ENCODE measurements at regions of chr4 and their contacts with region 1.

Region 1: GRCh38 chr4:101419324-101420135 is 72.2 kb upstream of the PPP3CA start:
- DNase-seq: no peak
- H3K4me3 Mint-ChIP-seq: peak overlapping the region; percentile 65
- H3K27ac Mint-ChIP-seq: peak overlapping the region; percentile 79
- H3K4me1 Mint-ChIP-seq: peaks cover 58% of the 10 kb centered on the region
- H3K27me3 Mint-ChIP-seq: peaks cover 11% of the 10 kb centered on the region

Region 2: DNA sequence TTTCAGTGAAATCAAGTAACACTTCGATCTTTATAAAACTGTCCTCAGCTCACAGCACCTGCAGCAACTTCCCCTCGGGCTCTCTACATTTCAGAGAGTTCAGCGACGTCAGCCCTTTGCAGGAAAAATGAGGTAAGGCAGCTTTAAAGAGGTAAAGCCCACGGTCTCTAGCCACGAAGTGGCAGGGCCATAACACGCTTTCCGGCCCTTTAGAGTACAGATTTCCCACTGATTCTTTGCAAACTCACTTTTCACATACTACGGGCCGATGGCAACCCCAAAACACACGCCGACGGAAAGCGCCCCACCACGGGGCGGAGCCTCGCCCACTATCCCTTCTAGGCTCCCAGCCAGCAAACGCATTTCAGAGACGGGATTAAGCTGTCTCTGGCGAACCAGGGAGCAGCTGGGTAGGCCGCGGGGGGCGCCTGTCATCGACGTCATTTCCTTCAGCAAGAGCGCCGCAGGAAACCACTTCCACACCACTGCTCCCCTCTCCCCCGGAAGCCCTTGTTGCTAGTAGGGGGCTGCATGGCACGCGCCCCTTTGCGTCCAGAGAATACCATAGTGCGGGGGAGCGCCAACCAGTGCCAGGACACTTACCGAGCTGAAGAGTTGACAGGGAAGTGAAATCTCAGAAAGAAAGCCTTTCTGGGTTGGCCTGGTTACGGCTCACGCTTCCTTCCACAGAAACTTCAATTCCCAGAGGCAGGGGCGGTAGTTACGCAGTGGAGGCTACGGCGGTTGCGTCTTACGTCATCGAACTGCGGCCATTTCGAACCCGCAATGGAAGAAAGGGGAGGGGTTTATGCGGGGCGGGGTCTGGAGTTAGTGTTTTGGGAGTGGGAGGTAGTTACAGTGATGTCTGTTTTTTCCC is 1856.0 kb before region 1 on chr4 and contains the start of gene TRMT10A:
- intact Hi-C with region 1: loop called (anchors 5 kb)
- DNase-seq: peak; percentile 92
- H3K4me3 Mint-ChIP-seq: peak within 1 kb of the TSS; percentile 89
- H3K27ac Mint-ChIP-seq: peak within 1 kb of the TSS; percentile 96
- H3K4me1 Mint-ChIP-seq: peaks cover 25% of the 10 kb centered on the region
- H3K27me3 Mint-ChIP-seq: peaks cover 11% of the 10 kb centered on the region
- total RNA-seq, gene TRMT10A: 7.3 TPM in 2 replicates

Region 3: GRCh38 chr4:100823066-100823992 is 596.2 kb before region 1 on chr4:
- intact Hi-C with region 1: loop called (anchors 1 kb)
- DNase-seq: peak; percentile 32
- H3K4me3 Mint-ChIP-seq: no peak overlapping the region
- H3K27ac Mint-ChIP-seq: peak overlapping the region; percentile 79
- H3K4me1 Mint-ChIP-seq: peaks cover 40% of the 10 kb centered on the region
- H3K27me3 Mint-ChIP-seq: no peaks in the 10 kb centered on the region

Region 4: GRCh38 chr4:101205916-101206315 is 213.6 kb before region 1 on chr4:
- intact Hi-C with region 1: loop called (anchors 1 kb)
- DNase-seq: peak; percentile 56
- H3K4me3 Mint-ChIP-seq: peak overlapping the region; percentile 0
- H3K27ac Mint-ChIP-seq: peak overlapping the region; percentile 67
- H3K4me1 Mint-ChIP-seq: peaks cover 42% of the 10 kb centered on the region
- H3K27me3 Mint-ChIP-seq: no peaks in the 10 kb centered on the region

Region 5: GRCh38 chr4:101321481-101322042 is 98.0 kb before region 1 on chr4:
- intact Hi-C with region 1: no loop called
- DNase-seq: no peak
- H3K4me3 Mint-ChIP-seq: no peak overlapping the region
- H3K27ac Mint-ChIP-seq: no peak overlapping the region
- H3K4me1 Mint-ChIP-seq: peaks cover 4% of the 10 kb centered on the region
- H3K27me3 Mint-ChIP-seq: peaks cover 21% of the 10 kb centered on the region

Region 6: DNA sequence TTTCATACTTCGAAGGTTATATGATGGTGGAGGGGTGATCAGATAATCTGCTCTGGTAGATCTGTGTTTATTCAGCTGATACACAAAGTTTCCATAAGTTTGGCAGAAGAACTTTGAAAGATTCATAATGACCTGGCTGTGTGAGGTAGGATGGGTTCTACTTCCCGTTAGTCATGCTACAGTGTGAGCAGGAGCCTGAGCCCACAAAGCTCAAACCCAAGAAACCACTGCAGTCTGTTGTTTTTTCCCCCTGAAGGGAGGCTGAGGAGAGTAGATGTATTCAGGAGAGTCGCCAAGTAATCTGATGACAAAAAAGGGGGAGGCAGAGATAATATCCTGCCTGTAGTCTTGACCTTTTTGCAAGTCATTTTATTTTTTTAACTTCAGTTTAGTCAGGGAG is 19.4 kb before region 1 on chr4:
- intact Hi-C with region 1: loop called (anchors 1 kb)
- DNase-seq: peak; percentile 12
- H3K4me3 Mint-ChIP-seq: peak overlapping the region; percentile 2
- H3K27ac Mint-ChIP-seq: peak overlapping the region; percentile 71
- H3K4me1 Mint-ChIP-seq: peaks cover 22% of the 10 kb centered on the region
- H3K27me3 Mint-ChIP-seq: peaks cover 6% of the 10 kb centered on the region

Region 7: DNA sequence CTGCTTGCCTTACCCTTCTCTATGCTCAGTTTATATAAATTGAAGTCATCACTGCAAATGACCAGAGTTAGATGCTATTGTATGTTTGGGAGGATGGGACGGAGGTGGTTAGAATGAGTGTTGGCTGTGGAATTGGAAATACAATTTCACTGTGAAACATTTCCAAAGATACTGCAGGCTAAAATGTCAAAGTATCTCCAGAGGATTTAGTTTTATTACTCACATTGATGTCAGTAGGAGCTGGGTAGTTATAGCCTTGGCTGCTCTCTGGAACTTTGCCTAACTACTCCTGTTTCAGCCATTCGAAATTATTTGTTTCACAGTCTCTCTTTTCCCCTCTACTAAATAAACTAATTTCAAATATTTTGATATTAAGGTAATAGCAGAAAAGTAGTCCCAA is 20.4 kb after region 1 on chr4:
- intact Hi-C with region 1: no loop called
- DNase-seq: no peak
- H3K4me3 Mint-ChIP-seq: no peak overlapping the region
- H3K27ac Mint-ChIP-seq: no peak overlapping the region
- H3K4me1 Mint-ChIP-seq: no peaks in the 10 kb centered on the region
- H3K27me3 Mint-ChIP-seq: peaks cover 23% of the 10 kb centered on the region

Region 8: GRCh38 chr4:101500742-101501141 is 81.2 kb after region 1 on chr4:
- intact Hi-C with region 1: no loop called
- DNase-seq: no peak
- H3K4me3 Mint-ChIP-seq: no peak overlapping the region
- H3K27ac Mint-ChIP-seq: no peak overlapping the region
- H3K4me1 Mint-ChIP-seq: no peaks in the 10 kb centered on the region
- H3K27me3 Mint-ChIP-seq: peaks cover 9% of the 10 kb centered on the region

Region 9: DNA sequence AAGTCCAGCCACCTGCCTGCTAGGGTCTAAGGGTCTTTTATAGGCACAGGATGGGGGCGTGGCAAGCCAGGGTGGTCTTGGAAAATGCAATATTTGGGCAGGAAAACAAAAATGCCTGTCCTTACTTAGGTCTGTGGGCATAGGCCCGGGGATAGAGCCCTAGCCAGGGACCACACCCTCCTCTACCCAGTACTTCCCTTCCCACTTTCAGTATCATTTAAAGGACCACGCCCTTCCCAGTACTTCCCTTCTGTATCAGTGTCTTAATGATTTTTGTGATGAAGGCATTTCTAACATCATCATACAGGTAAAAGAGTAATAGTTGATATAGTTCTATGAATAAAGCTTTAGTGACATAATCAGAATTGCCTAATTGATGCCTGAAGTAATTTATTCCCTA is 382.4 kb after region 1 on chr4:
- intact Hi-C with region 1: no loop called
- DNase-seq: no peak
- H3K4me3 Mint-ChIP-seq: no peak overlapping the region
- H3K27ac Mint-ChIP-seq: no peak overlapping the region
- H3K4me1 Mint-ChIP-seq: peaks cover 9% of the 10 kb centered on the region
- H3K27me3 Mint-ChIP-seq: peaks cover 13% of the 10 kb centered on the region

Region 10: DNA sequence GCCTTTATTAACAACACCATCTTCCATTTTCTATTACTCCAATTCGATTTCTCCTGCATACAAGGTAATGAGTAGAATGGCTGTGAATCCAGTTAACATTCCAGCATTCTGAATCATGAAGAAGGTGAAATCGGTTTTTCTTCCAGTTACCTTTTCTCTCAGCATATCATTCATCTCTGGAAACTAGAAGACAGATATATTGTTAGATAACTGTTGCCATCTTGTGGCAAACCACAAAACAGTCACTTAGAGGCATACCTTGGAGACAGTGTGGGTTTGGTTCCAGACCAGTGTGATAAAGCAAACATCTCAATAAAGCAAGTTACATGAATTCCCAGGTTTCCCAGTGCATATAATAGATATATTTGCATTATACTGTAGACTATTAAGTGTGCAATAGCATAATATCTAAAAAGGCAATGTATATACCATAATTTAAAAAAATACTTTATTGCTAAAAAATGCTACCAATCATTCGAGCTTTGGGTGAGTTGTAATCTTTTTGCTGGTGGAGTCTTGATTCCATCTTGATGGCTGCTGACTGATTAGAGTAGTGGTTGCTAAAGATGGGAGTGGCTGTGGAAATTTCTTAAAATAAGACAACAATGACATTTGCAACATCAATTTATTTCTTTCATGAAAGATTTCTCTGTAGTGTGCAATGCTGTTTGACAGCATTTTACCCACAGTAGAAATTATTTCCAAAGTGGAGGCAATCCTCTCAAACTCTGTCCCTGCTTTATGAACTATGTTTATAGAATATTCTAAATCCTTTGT is 843.7 kb after region 1 on chr4:
- intact Hi-C with region 1: loop called (anchors 10 kb)
- DNase-seq: no peak
- H3K4me3 Mint-ChIP-seq: no peak overlapping the region
- H3K27ac Mint-ChIP-seq: peak overlapping the region; percentile 19
- H3K4me1 Mint-ChIP-seq: peaks cover 16% of the 10 kb centered on the region
- H3K27me3 Mint-ChIP-seq: no peaks in the 10 kb centered on the region

Region 11: DNA sequence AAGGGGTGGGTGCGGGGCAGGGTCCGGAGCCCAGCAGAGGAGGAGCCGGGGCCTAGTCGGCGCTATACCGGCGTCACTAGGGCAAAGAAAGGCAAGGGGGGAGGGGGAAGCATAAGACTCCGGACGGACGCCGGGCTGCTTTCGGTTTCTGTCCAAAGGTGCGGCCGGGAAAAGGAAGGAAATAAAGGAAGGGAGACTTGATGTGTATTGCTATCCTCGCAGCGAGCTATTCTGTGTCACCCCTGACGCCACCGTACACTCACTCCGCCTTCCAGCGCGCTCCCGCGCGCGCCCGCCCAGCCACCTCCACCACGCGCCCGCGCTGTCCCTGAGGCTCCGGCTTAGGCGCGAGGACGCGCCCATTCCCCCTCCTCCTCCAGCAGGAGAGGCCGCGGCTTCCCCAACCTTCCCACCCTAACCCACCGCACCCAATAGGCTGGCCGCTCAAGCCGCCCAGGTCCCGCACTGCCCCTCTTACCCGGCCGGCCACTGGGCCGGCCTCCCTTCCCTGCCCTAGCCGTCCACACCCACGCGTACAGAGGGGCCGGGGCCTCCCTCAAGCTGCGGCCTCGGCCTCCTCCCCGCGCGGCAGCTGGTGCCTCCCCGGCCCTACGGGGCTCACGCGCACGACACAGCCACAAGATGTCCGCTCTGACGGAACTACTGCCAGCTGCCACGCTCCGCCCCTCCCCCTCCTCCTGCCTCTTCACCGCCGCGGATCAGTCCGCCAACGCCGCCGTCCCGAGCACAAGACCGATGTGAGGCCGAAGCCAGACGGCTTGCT is 1407.6 kb after region 1 on chr4 and contains the start of gene UBE2D3:
- intact Hi-C with region 1: loop called (anchors 2 kb)
- DNase-seq: peak; percentile 92
- H3K4me3 Mint-ChIP-seq: no peak within 1 kb of the TSS
- H3K27ac Mint-ChIP-seq: no peak within 1 kb of the TSS
- H3K4me1 Mint-ChIP-seq: peaks cover 38% of the 10 kb centered on the region
- H3K27me3 Mint-ChIP-seq: no peaks in the 10 kb centered on the region
- total RNA-seq, gene UBE2D3: 480 and 507 TPM in 2 replicates

Measured in activated T-helper 1 cell treated with anti-CD3 and anti-CD28 coated beads, Interleukin-12 subunit alpha, Interleukin-12 subunit beta, Interleukin-2, Interleukin-4 antibody, amounts not matched to agents 30 ng/mL and 10 ng/mL and 1 ng/mL, durations not matched to agents 14 hours and 24 hours and 36 hours (primary cell).